Activated naive CD4-positive, alpha-beta T cell treated with anti-CD3 and anti-CD28 coated beads for 36 hours (primary cell): ENCODE measurements at regions of chr20 and their contacts with region 1.

Region 1: DNA sequence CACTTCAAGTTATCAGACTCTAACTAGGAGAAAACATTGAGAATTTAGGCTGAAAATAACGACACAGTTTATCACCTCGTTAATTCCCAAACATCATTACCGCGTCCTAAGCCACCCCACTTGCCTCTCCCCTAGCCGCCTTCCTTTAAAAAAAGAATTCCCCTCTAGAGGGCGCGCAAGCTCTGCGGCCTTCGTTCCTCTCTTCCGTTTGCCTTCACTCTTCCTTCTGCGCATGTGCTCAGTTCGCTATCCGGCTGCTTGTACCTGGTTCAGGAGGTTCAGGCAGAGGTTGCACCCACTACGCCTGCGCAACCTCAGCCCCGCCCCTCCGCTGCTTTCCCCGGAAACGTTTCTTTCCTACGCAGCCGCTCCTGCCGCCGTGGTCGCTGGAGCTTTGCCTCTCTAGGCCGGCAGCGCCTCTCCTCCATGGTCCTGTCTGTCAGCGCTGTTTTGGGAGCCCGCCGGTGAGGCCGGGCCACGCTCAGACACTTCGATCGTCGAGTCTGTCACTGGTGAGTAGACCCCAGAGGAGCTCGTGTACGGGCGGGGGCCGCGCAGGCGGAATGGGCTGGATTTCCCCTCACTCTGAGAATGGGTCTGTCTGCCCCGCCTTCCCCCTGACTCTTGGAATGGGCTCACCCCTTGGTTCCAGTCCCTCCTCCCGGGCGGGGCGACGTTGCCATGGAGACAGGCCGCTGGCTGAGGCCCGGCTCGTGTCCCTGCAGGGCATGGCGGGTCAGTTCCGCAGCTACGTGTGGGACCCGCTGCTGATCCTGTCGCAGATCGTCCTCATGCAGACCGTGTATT is at the start of gene SYS1:
- DNase-seq: peak; percentile 99
- H3K4me3 Mint-ChIP-seq: peak within 1 kb of the TSS; percentile 96
- H3K27ac Mint-ChIP-seq: peak within 1 kb of the TSS; percentile 97
- H3K4me1 Mint-ChIP-seq: peaks cover 47% of the 10 kb centered on the region
- H3K27me3 Mint-ChIP-seq: no peaks in the 10 kb centered on the region
- total RNA-seq, gene SYS1: 24.0 to 26.0 TPM

Region 2: DNA sequence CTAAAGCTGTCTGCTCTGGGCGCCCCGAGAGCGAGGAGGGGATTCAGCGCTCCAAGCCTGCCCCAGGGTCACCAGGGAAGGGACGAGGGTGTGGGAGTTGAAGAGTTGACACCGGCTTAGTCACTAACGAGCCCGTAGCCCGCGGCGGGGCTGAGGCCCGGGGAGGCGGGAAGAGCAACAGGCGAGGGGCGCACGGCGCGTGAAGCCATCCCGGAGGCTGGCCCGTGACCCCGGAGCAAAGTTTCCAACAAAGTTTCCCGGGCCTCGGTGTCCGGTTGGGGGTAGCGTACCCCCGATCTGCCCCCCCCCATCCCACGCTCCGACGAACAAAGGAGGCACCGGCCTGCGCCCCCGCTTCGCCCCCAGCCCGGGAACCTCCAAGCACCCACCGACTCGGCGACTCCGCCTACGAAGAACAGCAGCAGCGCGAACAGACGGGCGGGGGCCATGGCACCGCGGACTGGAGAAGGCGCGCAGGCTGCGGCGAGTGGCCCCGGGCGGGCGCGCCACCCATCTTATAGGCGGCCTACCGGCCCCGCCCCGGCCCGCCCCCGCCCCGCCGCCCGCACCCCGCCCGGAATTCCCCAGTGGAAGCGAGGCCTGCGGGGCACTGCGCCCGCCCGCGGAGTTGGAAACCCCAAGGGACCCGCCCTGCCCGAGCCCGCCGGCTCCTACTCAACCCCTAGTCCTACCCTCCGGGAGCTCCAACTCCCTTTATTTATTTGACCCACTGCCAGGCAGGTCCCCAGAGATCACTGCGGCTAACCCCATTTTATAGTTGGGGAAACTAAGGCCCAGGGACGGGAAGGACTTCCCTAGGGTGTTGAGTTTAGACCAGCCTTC is 14.8 kb before region 1 on chr20 and contains the start of gene SDC4:
- CTCF ChIA-PET with region 1: interaction called, 6 read pairs
- intact Hi-C with region 1: loop called (anchors 1 kb)
- DNase-seq: peak; percentile 68
- H3K4me3 Mint-ChIP-seq: peak within 1 kb of the TSS; percentile 80
- H3K27ac Mint-ChIP-seq: peak within 1 kb of the TSS; percentile 77
- H3K4me1 Mint-ChIP-seq: peaks cover 38% of the 10 kb centered on the region
- H3K27me3 Mint-ChIP-seq: no peaks in the 10 kb centered on the region
- total RNA-seq, gene SDC4: 28.4 to 31.4 TPM

Region 3: DNA sequence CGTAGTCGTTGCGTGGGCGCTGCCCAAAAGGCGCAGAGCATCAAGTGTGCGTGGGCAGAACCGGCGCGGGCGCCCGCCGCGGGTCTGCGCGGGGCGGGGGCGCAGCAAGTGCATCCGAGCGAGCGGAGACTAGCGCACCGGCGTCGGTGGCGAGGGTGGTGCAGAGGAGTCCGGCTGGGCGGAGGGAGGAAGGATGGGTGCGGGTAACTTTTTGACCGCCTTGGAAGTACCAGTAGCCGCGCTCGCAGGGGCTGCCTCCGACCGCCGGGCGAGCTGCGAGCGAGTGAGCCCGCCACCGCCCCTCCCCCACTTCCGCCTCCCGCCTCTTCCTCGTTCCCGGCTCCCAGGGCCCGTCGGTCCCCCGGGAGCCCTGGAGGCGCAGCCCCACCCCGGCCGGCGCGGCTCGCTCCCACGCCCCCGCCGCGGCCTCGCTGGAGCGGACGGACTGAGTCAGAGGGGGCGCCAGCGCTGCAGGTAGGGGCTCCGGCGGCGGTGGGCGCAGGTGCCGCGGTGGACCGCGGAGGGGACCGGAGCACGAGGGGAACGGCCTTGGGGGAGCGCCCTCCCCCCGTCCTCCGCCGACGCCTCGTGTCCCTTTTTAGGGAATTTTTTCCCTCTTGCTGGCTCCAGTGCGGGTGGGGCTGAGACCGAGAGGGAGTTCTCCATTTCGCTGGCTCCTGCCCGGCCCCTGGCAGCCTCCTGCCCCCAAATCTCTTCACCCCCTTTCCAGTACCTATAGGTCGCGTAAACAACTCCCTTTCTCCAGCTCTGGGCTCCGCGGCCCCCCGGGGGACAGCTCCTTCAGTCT is 43.5 kb after region 1 on chr20:
- CTCF ChIA-PET with region 1: interaction called, 7 read pairs
- intact Hi-C with region 1: loop called (anchors 1 kb)
- DNase-seq: peak; percentile 59
- H3K4me3 Mint-ChIP-seq: peak overlapping the region; percentile 83
- H3K27ac Mint-ChIP-seq: peak overlapping the region; percentile 70
- H3K4me1 Mint-ChIP-seq: peaks cover 30% of the 10 kb centered on the region
- H3K27me3 Mint-ChIP-seq: peaks cover 5% of the 10 kb centered on the region

Region 4: DNA sequence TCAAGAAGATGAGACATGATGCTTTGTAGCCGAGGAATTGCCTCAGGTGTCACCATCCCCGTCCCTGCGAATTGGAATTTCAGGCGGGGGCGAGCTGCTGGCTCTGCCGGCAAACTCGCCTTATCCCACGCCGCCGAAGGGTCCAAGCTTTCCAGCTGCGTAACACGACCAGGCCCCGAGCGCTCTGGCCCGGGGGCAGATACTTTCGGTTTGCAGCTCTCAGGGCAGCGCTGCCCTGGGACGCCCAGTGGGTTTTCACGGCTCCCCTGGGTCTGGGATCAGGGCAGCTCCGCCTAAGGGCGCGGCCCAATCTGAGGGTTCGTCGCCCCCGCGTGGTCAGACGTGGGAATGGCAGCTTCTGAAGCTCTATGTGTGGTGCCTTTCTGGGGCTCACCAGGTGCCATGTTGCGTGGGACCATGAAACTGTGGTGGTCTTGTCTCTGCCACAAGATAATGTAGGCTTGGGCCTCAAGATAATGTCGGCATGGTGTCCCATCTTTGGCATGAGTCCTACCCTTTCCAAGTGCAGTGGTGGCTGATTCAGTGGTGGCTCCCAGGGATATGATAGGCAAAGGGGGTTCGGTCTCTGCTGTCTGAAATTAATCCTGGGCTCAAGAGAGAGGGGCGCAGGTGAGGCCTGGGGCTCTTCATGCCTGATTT is 73.9 kb after region 1 on chr20:
- CTCF ChIA-PET with region 1: interaction called, 47 read pairs
- intact Hi-C with region 1: loop called (anchors 1 kb)
- DNase-seq: peak; percentile 91
- H3K4me3 Mint-ChIP-seq: peak overlapping the region; percentile 64
- H3K27ac Mint-ChIP-seq: no peak overlapping the region
- H3K4me1 Mint-ChIP-seq: peaks cover 10% of the 10 kb centered on the region
- H3K27me3 Mint-ChIP-seq: no peaks in the 10 kb centered on the region

Region 5: DNA sequence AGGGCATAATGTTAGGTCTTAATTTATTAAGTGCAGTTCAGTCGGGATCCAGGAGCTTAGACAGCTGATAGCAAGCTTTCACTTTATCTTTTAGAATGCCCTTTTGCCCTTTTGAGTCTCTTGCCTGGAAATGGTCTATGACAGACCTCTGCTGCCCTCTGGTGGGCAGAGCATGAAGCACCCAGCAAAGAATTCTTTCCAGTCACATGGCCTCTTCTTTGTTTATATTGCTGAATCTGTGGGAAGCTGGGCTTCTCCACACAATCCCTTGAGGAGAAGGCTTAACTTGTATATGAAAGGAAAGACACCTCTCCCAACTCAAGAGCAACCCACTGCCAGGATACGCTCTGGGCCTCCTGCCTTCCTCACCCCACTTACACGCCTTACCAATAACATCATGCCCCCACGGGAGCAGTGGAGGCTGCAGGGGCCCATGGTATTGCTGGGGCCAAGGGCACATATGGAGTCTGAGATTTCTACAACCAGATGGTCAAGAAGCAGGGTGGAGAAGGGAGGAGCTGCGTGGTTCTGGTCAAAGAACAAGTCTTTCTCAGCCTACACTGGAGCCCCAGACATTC is 408.3 kb after region 1 on chr20:
- CTCF ChIA-PET with region 1: interaction called, 18 read pairs
- intact Hi-C with region 1: loop called (anchors 2 kb)
- DNase-seq: peak; percentile 88
- H3K4me3 Mint-ChIP-seq: no peak overlapping the region
- H3K27ac Mint-ChIP-seq: no peak overlapping the region
- H3K4me1 Mint-ChIP-seq: peaks cover 3% of the 10 kb centered on the region
- H3K27me3 Mint-ChIP-seq: peaks cover 3% of the 10 kb centered on the region